Endothelial cell of umbilical vein (primary cell): ENCODE measurements at regions of chr1 and their contacts with region 1.

Region 1: DNA sequence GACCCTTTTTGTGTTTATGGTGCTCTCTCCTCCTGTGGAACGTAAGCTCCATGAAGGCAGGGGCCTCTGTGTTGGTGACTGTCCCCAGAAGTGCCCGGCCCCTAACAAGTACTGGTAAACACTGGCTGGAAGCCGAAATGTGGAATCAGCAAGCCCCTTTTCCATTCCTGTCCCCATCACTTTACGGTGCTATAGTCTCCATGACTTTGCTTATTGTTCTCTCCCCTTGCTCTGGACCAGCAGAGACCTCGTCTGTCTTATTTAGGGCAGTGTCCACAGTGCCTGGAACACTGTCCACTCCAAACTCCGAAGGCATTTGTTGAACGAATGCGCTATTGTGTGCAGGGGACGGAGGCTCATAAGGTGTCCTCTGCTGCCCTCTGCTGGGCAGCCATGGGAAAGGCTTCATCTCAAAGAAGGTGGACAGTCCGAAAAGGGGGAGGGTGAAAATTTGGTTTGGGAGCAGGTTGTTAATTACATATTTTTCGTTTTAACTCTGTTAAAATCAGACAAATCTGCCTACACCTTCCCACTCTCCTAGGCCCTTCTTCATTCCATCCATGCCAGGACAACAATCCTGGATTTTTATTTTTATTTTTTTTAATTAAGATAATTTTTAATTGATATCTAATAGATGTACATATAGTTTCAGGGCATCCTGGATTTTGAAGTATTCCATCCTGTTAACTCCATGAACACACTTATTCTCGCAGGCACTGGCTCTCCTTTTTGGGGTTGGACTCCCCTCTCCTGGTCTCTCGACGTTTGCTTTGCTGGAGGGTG is 115.6 kb downstream of the PGBD5 start:
- DNase-seq: peak; percentile 68
- H3K4me3 ChIP-seq: no peak overlapping the region
- H3K27ac ChIP-seq: no peak overlapping the region
- H3K4me1 ChIP-seq: peaks cover 8% of the 10 kb centered on the region
- H3K27me3 ChIP-seq: no peaks in the 10 kb centered on the region
- CTCF ChIP-seq: peak; percentile 80 to 87
- POLR2A ChIP-seq: no peak

Region 2: DNA sequence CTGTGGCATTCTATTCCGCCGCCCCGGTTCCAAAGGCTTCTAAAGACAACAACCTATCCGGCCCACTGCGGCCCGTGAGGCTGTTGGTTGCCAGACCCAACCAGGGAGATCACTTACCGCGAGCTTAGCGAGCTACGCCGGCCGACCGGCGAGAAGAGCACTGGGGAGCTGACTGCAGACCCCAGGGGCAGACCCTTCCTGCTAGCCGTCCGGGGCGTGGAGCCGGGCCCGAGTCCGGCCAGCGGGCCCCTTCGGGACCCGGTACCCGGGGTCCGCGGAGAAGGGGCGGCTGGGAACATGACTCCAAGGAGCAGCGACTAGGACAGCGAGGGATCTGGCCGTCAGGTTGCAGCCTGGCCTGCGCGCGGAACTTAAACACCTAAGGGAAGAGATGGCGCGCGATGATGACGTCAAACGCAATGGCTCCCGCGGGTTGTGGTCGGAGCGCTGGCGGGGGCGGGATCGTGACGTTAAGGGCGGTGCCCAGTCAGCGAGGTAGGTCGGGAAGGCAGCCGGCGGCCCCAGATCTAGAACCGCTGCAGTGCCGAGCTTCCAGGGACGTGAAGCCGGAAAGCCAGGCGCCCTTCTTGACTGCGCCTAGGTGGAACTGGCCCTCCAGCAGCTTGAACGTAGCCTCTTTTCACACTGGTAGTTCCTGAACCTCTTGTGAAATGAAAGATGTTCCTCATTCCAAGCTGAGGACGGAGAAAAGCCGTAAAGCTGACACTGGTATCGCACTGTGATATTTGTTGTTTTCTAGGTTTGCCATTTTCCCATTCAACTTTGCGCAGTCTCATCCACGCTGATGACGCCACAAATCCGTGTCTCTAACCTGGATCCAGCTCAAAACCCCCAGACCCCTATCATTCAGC is 802.4 kb before region 1 on chr1 and contains the start of gene NUP133:
- CTCF ChIA-PET with region 1: interaction called, 3 read pairs
- POLR2A ChIA-PET with region 1: no interaction called
- dilution Hi-C with region 1: no loop called
- intact Hi-C with region 1: loop called (anchors 1 kb)
- DNase-seq: peak; percentile 99
- H3K4me3 ChIP-seq: peak within 1 kb of the TSS; percentile 61 to 93 (median 64)
- H3K27ac ChIP-seq: peak within 1 kb of the TSS; percentile 56
- H3K4me1 ChIP-seq: peaks cover 14% of the 10 kb centered on the region
- H3K27me3 ChIP-seq: no peaks in the 10 kb centered on the region
- CTCF ChIP-seq: no peak
- POLR2A ChIP-seq: peak; percentile 99
- total RNA-seq, gene NUP133: 35.9 and 43.2 TPM in 2 replicates

Region 3: GRCh38 chr1:229661022-229661877 is 649.3 kb before region 1 on chr1:
- CTCF ChIA-PET with region 1: interaction called, 51 read pairs
- POLR2A ChIA-PET with region 1: no interaction called
- dilution Hi-C with region 1: no loop called
- intact Hi-C with region 1: loop called (anchors 1 kb)
- DNase-seq: peak; percentile 61
- H3K4me3 ChIP-seq: no peak overlapping the region
- H3K27ac ChIP-seq: no peak overlapping the region
- H3K4me1 ChIP-seq: peaks cover 17% of the 10 kb centered on the region
- H3K27me3 ChIP-seq: no peaks in the 10 kb centered on the region
- CTCF ChIP-seq: peak; percentile 82 to 92
- POLR2A ChIP-seq: no peak

Region 4: GRCh38 chr1:229893762-229894444 is 416.7 kb before region 1 on chr1:
- CTCF ChIA-PET with region 1: no interaction called
- POLR2A ChIA-PET with region 1: no interaction called
- dilution Hi-C with region 1: no loop called
- intact Hi-C with region 1: loop called (anchors 10 kb)
- DNase-seq: no peak
- H3K4me3 ChIP-seq: no peak overlapping the region
- H3K27ac ChIP-seq: no peak overlapping the region
- H3K4me1 ChIP-seq: no peaks in the 10 kb centered on the region
- H3K27me3 ChIP-seq: no peaks in the 10 kb centered on the region
- CTCF ChIP-seq: no peak
- POLR2A ChIP-seq: no peak

Region 5: GRCh38 chr1:230160957-230161771 is 149.4 kb before region 1 on chr1:
- CTCF ChIA-PET with region 1: no interaction called
- POLR2A ChIA-PET with region 1: no interaction called
- dilution Hi-C with region 1: no loop called
- intact Hi-C with region 1: loop called (anchors 2 kb)
- DNase-seq: peak; percentile 93
- H3K4me3 ChIP-seq: no peak overlapping the region
- H3K27ac ChIP-seq: no peak overlapping the region
- H3K4me1 ChIP-seq: peaks cover 15% of the 10 kb centered on the region
- H3K27me3 ChIP-seq: peaks cover 0 to 5% of the 10 kb centered on the region in 2 experiments
- CTCF ChIP-seq: no peak
- POLR2A ChIP-seq: no peak